Vagina (tissue), 2 donors: ENCODE measurements at regions of chr2 and their contacts with region 1.

Region 1: DNA sequence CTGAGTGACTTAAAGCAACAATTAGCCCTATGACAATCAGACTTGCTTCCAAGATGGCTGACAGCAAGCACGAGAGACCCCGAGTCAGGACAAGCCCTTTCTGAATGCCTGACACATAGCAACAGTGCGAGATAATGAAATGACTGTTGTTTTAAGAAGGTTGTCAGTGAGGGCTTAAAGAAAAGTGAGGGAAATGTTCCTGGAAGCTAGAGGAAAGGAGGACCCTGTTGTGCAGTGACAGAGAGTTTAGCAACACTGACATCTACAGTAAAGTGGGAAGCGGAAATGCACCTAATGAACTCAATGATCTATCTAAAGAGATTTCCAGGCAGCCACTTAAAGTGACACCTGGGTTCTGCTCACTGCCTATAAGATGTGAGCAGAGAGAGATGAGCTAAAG is 163.1 kb downstream of the STK39 start:
- DNase-seq: no peak
- H3K4me3 ChIP-seq: no peak overlapping the region
- H3K27ac ChIP-seq: no peak overlapping the region
- H3K4me1 ChIP-seq: no peaks in the 10 kb centered on the region
- H3K27me3 ChIP-seq: no peaks in the 10 kb centered on the region
- CTCF ChIP-seq: no peak
- POLR2A ChIP-seq: no peak

Region 2: GRCh38 chr2:167964650-167965413 is 119.5 kb before region 1 on chr2:
- intact Hi-C with region 1: no loop called
- DNase-seq: no peak
- H3K4me3 ChIP-seq: no peak overlapping the region
- H3K27ac ChIP-seq: no peak overlapping the region
- H3K4me1 ChIP-seq: peaks cover 14% of the 10 kb centered on the region
- H3K27me3 ChIP-seq: no peaks in the 10 kb centered on the region
- CTCF ChIP-seq: no peak
- POLR2A ChIP-seq: no peak

Region 3: GRCh38 chr2:168030862-168031624 is 53.3 kb before region 1 on chr2:
- intact Hi-C with region 1: loop called (anchors 2 kb)
- DNase-seq: no peak
- H3K4me3 ChIP-seq: no peak overlapping the region
- H3K27ac ChIP-seq: peak overlapping the region; percentile 9
- H3K4me1 ChIP-seq: peaks cover 10% of the 10 kb centered on the region
- H3K27me3 ChIP-seq: no peaks in the 10 kb centered on the region
- CTCF ChIP-seq: no peak
- POLR2A ChIP-seq: no peak

Region 4: GRCh38 chr2:168300460-168300859 is 216.1 kb after region 1 on chr2:
- intact Hi-C with region 1: no loop called
- DNase-seq: no peak
- H3K4me3 ChIP-seq: no peak overlapping the region
- H3K27ac ChIP-seq: no peak overlapping the region
- H3K4me1 ChIP-seq: peaks cover 6% of the 10 kb centered on the region
- H3K27me3 ChIP-seq: no peaks in the 10 kb centered on the region
- CTCF ChIP-seq: no peak
- POLR2A ChIP-seq: no peak

Region 5: DNA sequence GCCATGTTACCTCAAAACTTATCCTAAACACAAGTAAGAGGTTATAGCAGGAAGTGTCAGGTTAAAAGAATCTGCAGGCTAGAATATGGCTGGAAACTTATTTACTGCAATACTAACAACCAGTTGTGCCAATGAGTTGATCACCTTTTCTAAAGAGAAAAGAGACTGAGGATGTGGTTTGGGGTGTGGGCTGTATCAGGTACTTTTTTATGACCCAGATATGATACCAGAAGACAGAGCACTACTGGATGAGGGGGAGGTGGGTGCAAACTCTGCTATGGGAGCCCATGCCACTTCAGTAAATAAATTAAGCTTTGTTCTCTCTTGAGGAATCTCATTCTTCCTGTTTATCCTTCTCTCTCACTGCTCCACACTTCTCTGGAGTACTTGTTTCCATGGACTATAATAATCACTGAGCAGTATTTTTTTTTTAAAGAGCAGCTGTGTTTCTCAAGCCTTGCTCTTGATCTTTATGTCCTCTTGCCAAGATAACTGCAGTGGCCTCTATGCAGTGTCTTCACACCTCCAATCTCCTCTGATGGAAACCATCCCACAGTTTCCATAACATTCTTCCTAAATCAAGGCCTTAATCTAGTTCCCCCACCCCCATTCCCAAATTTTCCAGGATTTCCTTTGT is 666.9 kb after region 1 on chr2:
- intact Hi-C with region 1: no loop called
- DNase-seq: no peak
- H3K4me3 ChIP-seq: no peak overlapping the region
- H3K27ac ChIP-seq: no peak overlapping the region
- H3K4me1 ChIP-seq: no peaks in the 10 kb centered on the region
- H3K27me3 ChIP-seq: no peaks in the 10 kb centered on the region
- CTCF ChIP-seq: no peak
- POLR2A ChIP-seq: no peak

Region 6: GRCh38 chr2:169300636-169301530 is 1216.6 kb after region 1 on chr2:
- intact Hi-C with region 1: no loop called
- DNase-seq: no peak
- H3K4me3 ChIP-seq: no peak overlapping the region
- H3K27ac ChIP-seq: no peak overlapping the region
- H3K4me1 ChIP-seq: no peaks in the 10 kb centered on the region
- H3K27me3 ChIP-seq: no peaks in the 10 kb centered on the region
- CTCF ChIP-seq: no peak
- POLR2A ChIP-seq: no peak